ENCODE measurements at regions of chr16 and their contacts with region 1.

Region 1: GRCh38 chr16:30922960-30923535 is 324 bp upstream of the FBXL19 start:
- DNase-seq: peak; percentile 100
- ATAC-seq: peak; percentile 93
- H3K4me3 ChIP-seq: peak overlapping the region; percentile 49 to 90
- H3K27ac ChIP-seq: peak overlapping the region in 1 of 2 donors; percentile 93
- H3K4me1 ChIP-seq: peaks cover 0 to 1% of the 10 kb centered on the region in 2 donors
- H3K27me3 ChIP-seq: no peaks in the 10 kb centered on the region

Region 2: DNA sequence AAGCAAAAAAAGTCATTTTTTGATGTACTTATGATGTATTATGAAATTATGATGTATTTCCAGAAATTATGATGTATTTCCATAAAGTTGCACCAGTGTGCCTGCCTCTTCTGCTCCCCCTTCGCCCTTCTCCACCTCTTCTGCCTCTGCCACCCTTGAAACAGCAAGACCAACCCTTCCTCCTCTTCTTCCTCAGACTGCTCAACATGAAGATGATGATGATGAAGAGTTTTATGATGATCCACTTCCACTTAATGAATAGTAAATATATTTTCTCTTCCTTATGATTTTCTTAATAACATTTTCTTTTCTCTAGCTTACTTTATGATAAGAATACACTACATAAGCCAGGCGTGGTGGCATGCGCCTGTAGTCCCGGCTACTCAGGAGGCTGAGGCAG is 330.2 kb before region 1 on chr16:
- intact Hi-C with region 1: no loop called
- DNase-seq: no peak
- ATAC-seq: no peak
- H3K4me3 ChIP-seq: no peak overlapping the region
- H3K27ac ChIP-seq: no peak overlapping the region
- H3K4me1 ChIP-seq: no peaks in the 10 kb centered on the region
- H3K27me3 ChIP-seq: no peaks in the 10 kb centered on the region

Region 3: DNA sequence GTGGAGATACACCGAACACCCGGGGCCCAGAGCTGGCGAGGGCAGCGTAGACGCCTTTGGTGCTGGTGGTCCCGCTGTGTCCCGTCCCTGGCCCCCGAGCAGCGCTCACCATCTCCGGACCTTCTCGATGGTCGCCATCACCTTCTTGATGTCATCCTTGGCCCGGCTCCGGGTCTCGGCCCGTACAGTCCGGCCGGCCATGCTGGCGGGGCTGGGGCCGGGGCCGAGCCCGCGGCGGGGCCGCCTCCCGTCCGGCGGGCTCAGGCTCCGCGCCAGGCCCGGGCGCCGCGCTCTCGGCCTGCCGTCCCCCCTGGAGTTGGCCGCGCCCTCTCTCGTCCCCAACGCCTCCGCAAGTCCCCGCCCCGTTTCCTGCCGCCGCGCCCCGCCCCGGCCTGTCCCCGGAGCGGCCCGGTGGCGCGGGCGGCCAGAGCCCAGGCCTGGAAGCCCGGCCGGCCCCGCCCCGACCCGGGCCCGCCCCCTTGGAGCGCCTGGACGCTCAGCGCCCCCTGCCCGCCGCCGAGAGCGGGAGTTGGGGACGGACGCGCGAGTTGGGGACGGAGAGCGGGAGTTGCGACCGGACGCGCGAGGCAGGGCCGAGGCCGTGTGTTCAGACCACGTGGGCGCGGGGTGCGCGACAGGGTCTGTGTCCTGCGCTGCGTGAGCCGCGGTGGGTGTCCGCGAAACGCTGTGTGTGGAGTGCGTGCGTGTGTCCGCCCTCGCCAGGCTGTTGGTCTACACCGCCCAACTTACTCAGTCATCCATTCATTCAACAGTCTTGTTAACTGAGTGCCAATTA is 29.1 kb before region 1 on chr16 and contains the start of gene BCL7C:
- intact Hi-C with region 1: loop called in 1 of 2 experiments (anchors 1 kb)
- DNase-seq: peak; percentile 95 to 98
- ATAC-seq: peak; percentile 91
- H3K4me3 ChIP-seq: peak within 1 kb of the TSS; percentile 56 to 80
- H3K27ac ChIP-seq: peak within 1 kb of the TSS; percentile 10 to 48
- H3K4me1 ChIP-seq: no peaks in the 10 kb centered on the region
- H3K27me3 ChIP-seq: no peaks in the 10 kb centered on the region
- total RNA-seq, gene BCL7C: 30.2 to 33.9 TPM